HCT116 (cell line): ENCODE measurements at regions of chr6 and their contacts with region 1.

Region 1: GRCh38 chr6:7725849-7726415 is at the start of gene BMP6:
- DNase-seq: peak; percentile 71
- ATAC-seq: peak; percentile 95
- H3K4me3 ChIP-seq: peak within 1 kb of the TSS in 1 of 2 experiments; percentile 30; a peak in 2 of 4 replicates
- H3K27ac ChIP-seq: no peak within 1 kb of the TSS
- H3K4me1 ChIP-seq: peaks cover 11 to 23% of the 10 kb centered on the region in 2 experiments
- H3K27me3 ChIP-seq: no peaks in the 10 kb centered on the region
- CTCF ChIP-seq: no peak
- POLR2A ChIP-seq: no peak
- RAD21 ChIP-seq: no peak
- total RNA-seq, gene BMP6: 1.6 TPM

Region 2: DNA sequence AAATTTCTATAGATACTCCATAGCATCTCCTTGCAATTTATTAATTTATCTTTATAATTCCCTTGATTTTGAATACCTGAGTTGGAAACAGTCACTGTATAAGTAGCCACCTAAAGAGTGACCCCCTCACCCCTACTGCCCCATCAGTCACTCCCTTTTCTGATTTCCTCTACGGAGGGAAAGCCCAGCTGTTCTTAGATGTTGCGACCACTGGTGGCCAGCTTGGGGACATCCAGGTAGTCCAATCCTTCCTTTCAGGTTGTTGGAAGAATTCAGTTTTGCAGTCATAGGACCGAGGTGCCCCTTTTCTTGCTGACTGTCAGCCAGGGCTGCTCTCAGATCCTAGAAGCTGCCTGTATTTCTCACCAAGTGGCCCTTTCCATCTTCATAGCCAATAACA is 87.8 kb after region 1 on chr6:
- CTCF ChIA-PET with region 1: interaction called, 16 read pairs
- POLR2A ChIA-PET with region 1: no interaction called
- RAD21 ChIA-PET with region 1: no interaction called
- intact Hi-C with region 1: no loop called
- DNase-seq: peak; percentile 19
- ATAC-seq: peak; percentile 91
- H3K4me3 ChIP-seq: no peak overlapping the region
- H3K27ac ChIP-seq: no peak overlapping the region
- H3K4me1 ChIP-seq: no peaks in the 10 kb centered on the region
- H3K27me3 ChIP-seq: no peaks in the 10 kb centered on the region
- CTCF ChIP-seq: peak; percentile 34 to 59 (median 47); a peak in 4 of 6 replicates
- POLR2A ChIP-seq: no peak
- RAD21 ChIP-seq: peak; percentile 50

Region 3: DNA sequence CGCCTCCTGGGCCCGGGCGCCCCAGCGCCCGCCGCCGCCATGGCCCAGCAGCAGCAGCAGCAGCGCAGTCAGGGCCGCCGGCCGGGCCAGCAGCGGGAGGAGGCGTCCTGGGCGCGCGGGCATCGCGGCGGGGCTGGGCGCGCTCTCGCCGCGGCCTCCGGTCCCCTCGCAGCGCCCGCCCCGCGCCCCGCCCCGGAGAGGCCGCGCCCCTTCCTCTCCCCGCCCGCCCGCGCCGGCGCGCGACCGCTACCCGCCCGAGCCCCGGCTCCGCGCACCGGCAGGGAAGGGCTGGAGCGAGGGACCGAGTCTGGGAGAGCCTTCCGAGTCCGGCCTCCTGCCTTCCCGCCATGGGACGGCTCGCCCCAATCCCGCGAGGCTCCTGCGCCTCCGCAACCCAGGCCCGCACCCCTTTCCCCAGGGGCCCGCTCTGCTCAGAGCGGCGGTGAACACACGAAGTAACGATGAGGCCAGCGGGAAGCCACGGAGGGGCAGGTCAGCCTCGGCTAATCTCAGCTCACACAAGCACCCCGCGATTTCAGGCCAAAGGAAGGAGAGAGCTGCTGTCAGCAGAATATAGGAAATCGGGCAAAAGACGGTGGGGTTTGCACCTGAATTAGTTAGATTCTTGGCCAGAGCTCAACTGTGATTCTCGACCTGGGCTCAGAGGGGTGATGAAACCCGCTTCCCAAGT is 184.9 kb after region 1 on chr6 and contains the start of gene TXNDC5:
- CTCF ChIA-PET with region 1: no interaction called
- POLR2A ChIA-PET with region 1: no interaction called
- RAD21 ChIA-PET with region 1: no interaction called
- intact Hi-C with region 1: loop called (anchors 10 kb)
- DNase-seq: no peak
- ATAC-seq: peak; percentile 84
- H3K4me3 ChIP-seq: peak within 1 kb of the TSS; percentile 79 to 94
- H3K27ac ChIP-seq: peak within 1 kb of the TSS; percentile 87
- H3K4me1 ChIP-seq: peaks cover 5 to 24% of the 10 kb centered on the region in 2 experiments
- H3K27me3 ChIP-seq: peaks cover 27% of the 10 kb centered on the region; the same call in 1 of the 2 replicates
- CTCF ChIP-seq: no peak
- POLR2A ChIP-seq: peak; percentile 73
- RAD21 ChIP-seq: no peak
- total RNA-seq, gene TXNDC5: 162 TPM

Region 4: DNA sequence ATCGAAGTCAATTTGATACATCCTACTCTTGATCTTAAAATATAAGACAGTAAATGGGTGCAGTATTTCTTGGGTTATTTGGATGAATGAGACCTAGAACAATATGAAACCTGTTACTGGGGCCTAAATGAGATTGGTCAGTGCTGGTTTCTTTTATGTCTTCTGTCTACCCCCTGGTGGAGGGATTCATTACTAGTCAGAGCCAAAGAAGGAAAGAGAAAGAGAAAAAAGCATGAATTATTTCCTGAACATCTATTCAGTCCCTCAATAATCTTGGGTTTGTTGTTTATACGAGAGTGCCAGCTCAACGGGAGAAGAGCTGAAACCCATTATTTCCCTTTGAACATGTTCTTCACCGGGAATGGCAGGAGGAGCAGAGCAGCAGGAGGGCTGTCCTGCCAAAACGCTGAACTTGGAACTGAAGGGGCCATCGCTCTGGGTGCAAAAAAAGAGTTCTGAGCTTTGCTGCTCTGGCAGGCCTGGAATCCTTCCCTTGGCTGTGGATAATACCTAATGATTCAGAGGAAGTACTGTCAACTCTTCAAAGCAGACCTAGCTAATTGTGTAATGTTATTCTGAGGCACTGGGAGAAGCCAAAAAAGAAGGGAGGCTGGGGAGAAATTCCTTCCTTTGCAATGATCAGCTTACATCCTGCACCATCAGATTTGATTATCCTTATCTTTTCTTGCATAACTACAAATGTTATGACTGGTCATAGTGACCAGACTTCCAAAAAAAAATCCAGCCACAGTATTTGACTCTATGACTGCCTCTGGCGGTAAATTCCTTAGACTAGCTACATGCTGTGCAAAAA is 266.3 kb after region 1 on chr6:
- CTCF ChIA-PET with region 1: interaction called, 21 read pairs
- POLR2A ChIA-PET with region 1: no interaction called
- RAD21 ChIA-PET with region 1: interaction called, 3 to 6 read pairs
- intact Hi-C with region 1: loop called (anchors 2 kb)
- DNase-seq: peak; percentile 24
- ATAC-seq: peak; percentile 77
- H3K4me3 ChIP-seq: no peak overlapping the region
- H3K27ac ChIP-seq: no peak overlapping the region
- H3K4me1 ChIP-seq: no peaks in the 10 kb centered on the region
- H3K27me3 ChIP-seq: no peaks in the 10 kb centered on the region
- CTCF ChIP-seq: peak; percentile 46 to 68 (median 61); a peak in 5 of 6 replicates
- POLR2A ChIP-seq: no peak
- RAD21 ChIP-seq: peak; percentile 87

Region 5: GRCh38 chr6:8006208-8006607 is 280.3 kb after region 1 on chr6:
- CTCF ChIA-PET with region 1: interaction called, 21 read pairs
- POLR2A ChIA-PET with region 1: interaction called, 4 read pairs
- RAD21 ChIA-PET with region 1: interaction called in 1 of 2 experiments, 8 read pairs
- intact Hi-C with region 1: loop called (anchors 1 kb)
- DNase-seq: peak; percentile 27
- ATAC-seq: peak; percentile 60; the same call in 1 of the 2 replicates
- H3K4me3 ChIP-seq: no peak overlapping the region
- H3K27ac ChIP-seq: no peak overlapping the region
- H3K4me1 ChIP-seq: no peaks in the 10 kb centered on the region
- H3K27me3 ChIP-seq: no peaks in the 10 kb centered on the region
- CTCF ChIP-seq: peak; percentile 50 to 68 (median 55); a peak in 5 of 6 replicates
- POLR2A ChIP-seq: no peak
- RAD21 ChIP-seq: peak; percentile 75

Region 6: DNA sequence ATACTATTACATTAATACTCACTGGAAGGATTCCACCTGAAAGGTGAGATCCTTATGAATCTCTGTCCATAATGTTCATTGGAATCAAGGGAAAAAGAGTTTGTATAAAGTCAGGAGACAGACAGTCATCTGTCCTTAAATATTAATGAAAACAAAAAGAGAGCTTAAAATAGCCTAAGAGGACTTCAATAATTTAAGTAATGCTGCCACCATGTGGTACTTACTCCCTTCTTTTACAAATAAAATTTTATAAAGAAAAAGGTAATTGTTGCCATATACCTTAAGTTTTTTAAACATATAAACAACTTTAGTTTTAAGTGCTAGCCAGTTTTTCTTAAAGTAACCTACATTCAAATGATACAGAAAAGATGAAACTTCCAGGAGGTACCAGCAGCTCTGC is 333.2 kb after region 1 on chr6:
- CTCF ChIA-PET with region 1: interaction called, 15 read pairs
- POLR2A ChIA-PET with region 1: no interaction called
- RAD21 ChIA-PET with region 1: interaction called, 3 to 8 read pairs
- intact Hi-C with region 1: loop called (anchors 1 kb)
- DNase-seq: no peak
- ATAC-seq: no peak
- H3K4me3 ChIP-seq: no peak overlapping the region
- H3K27ac ChIP-seq: no peak overlapping the region
- H3K4me1 ChIP-seq: peaks cover 0 to 3% of the 10 kb centered on the region in 2 experiments; a peak in 1 of 4 replicates
- H3K27me3 ChIP-seq: no peaks in the 10 kb centered on the region
- CTCF ChIP-seq: peak; percentile 9 to 45 (median 26); a peak in 3 of 6 replicates
- POLR2A ChIP-seq: no peak
- RAD21 ChIP-seq: peak; percentile 64

Region 7: GRCh38 chr6:8219352-8219943 is 493.5 kb after region 1 on chr6:
- CTCF ChIA-PET with region 1: interaction called, 5 read pairs
- POLR2A ChIA-PET with region 1: no interaction called
- RAD21 ChIA-PET with region 1: no interaction called
- intact Hi-C with region 1: loop called (anchors 5 kb)
- DNase-seq: peak; percentile 23
- ATAC-seq: peak; percentile 78
- H3K4me3 ChIP-seq: no peak overlapping the region
- H3K27ac ChIP-seq: no peak overlapping the region
- H3K4me1 ChIP-seq: no peaks in the 10 kb centered on the region
- H3K27me3 ChIP-seq: no peaks in the 10 kb centered on the region
- CTCF ChIP-seq: peak; percentile 68 to 81 (median 69)
- POLR2A ChIP-seq: no peak
- RAD21 ChIP-seq: peak; percentile 77